Dendritic cell treated with granulocyte-macrophage colony-stimulating factor and Interleukin-4, amounts not matched to agents 40 ng/mL and 50 ng/mL, for 4 days (primary cell): ENCODE measurements at regions of chr10 and their contacts with region 1.

Region 1: DNA sequence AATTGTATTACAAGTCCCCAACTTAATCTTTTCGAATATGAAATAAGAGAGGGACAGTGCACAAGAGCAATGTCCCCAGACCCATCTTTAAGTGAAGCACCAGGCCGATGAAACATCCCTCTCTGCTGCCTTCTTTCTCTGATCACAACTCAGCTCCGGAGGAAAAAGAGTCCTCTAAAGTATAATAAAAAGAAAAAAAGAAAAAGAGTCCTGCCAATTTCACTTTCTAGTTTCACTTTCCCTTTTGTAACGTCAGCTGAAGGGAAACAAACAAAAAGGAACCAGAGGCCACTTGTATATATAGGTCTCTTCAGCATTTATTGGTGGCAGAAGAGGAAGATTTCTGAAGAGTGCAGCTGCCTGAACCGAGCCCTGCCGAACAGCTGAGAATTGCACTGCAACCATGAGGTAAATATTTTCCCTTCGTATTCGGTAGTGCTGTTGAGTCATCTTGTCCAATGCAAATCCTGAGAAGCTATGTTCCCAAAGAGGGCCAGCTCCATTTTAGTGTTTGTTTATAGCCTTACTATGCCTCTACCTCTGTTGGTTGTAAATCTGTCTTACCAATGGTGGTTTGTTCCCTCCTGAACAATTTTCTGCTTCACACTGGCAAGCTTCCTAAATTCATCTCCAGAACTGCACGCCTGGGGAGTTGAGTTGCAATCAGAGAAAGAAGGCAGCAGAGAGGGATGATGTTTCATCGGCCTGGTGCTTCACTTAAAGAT is at the start of gene IFIT2:
- H3K4me3 Mint-ChIP-seq: peak within 1 kb of the TSS; percentile 71
- H3K27ac Mint-ChIP-seq: peak within 1 kb of the TSS; percentile 85
- H3K4me1 Mint-ChIP-seq: peaks cover 51% of the 10 kb centered on the region
- H3K27me3 Mint-ChIP-seq: peaks cover 6% of the 10 kb centered on the region

Region 2: DNA sequence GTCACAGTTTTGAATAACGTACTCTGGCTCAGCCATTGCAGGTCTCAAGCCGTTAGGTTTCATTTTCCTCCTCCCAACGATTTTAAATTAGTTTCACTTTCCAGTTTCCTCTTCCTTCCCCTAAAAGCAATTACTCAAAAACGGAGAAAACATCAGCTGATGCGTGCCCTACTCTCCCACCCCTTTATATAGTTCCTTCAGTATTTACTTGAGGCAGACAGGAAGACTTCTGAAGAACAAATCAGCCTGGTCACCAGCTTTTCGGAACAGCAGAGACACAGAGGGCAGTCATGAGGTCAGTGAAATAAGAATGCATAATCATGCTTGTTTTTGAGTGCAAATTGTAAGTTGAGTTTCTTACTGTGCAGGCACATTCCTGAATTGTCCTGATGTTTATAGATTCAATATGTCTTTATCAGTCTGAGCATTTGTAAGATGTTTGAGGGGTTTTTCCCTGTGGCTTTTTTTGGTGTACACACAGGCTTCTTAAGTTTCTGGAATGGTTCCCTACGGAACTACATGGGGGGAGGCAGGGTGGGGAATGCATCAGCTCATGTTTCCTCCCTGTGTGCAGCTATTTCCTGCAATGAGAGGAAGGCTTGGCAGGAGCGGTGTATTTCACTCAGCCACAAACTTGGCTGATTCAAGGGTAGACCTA is 26.0 kb after region 1 on chr10 and contains the start of gene IFIT3:
- intact Hi-C with region 1: loop called (anchors 1 kb)
- H3K4me3 Mint-ChIP-seq: peak within 1 kb of the TSS; percentile 68
- H3K27ac Mint-ChIP-seq: peak within 1 kb of the TSS; percentile 82
- H3K4me1 Mint-ChIP-seq: peaks cover 41% of the 10 kb centered on the region
- H3K27me3 Mint-ChIP-seq: peaks cover 2% of the 10 kb centered on the region

Region 3: GRCh38 chr10:89391917-89392756 is 90.3 kb after region 1 on chr10 and contains the start of gene IFIT1:
- intact Hi-C with region 1: loop called (anchors 5 kb)
- H3K4me3 Mint-ChIP-seq: peak within 1 kb of the TSS; percentile 67
- H3K27ac Mint-ChIP-seq: peak within 1 kb of the TSS; percentile 51
- H3K4me1 Mint-ChIP-seq: peaks cover 11% of the 10 kb centered on the region
- H3K27me3 Mint-ChIP-seq: no peaks in the 10 kb centered on the region